CD8-positive, alpha-beta memory T cell (primary cell): ENCODE measurements at regions of chr4 and their contacts with region 1.

Region 1: GRCh38 chr4:39947423-39947822 is 30.3 kb downstream of the PDS5A start:
- DNase-seq: no peak
- H3K4me3 ChIP-seq: no peak overlapping the region
- H3K4me3 Mint-ChIP-seq: peak overlapping the region in 1 of 7 donors; percentile 42
- H3K27ac ChIP-seq: no peak overlapping the region
- H3K27ac Mint-ChIP-seq: peak overlapping the region in 5 of 8 donors; percentile 13 to 68 (median 52)
- H3K4me1 ChIP-seq: peaks cover 6% of the 10 kb centered on the region
- H3K4me1 Mint-ChIP-seq: peaks cover 41 to 69% (median 68%) of the 10 kb centered on the region in 3 donors
- H3K27me3 ChIP-seq: no peaks in the 10 kb centered on the region
- H3K27me3 Mint-ChIP-seq: no peaks in the 10 kb centered on the region

Region 2: GRCh38 chr4:39741401-39741800 is 206.0 kb before region 1 on chr4:
- CTCF ChIA-PET with region 1: no interaction called
- POLR2A ChIA-PET with region 1: interaction called, 10 read pairs
- DNase-seq: no peak
- H3K4me3 ChIP-seq: no peak overlapping the region
- H3K4me3 Mint-ChIP-seq: no peak overlapping the region
- H3K27ac ChIP-seq: no peak overlapping the region
- H3K27ac Mint-ChIP-seq: peak overlapping the region in 1 of 8 donors; percentile 33
- H3K4me1 ChIP-seq: no peaks in the 10 kb centered on the region
- H3K4me1 Mint-ChIP-seq: peaks cover 12 to 25% (median 18%) of the 10 kb centered on the region in 3 donors
- H3K27me3 ChIP-seq: no peaks in the 10 kb centered on the region
- H3K27me3 Mint-ChIP-seq: no peaks in the 10 kb centered on the region

Region 3: DNA sequence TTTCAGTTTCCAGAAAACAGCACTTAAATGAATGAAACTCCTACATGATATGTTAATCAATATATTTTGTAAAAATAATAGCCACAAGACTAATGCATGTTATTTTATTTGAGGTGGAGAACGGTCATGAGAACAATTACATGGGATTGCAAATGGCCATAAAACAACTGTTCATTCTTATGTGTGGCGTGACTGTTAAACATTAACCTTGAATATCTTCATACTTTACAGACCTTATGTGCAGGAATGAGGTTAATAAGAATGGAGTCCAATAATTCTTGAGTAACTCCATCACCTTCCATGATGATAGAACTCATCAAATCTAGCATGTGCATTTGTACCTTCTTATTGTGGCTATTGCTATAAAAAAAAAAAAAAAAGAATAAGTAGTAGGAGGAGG is 25.0 kb before region 1 on chr4:
- CTCF ChIA-PET with region 1: no interaction called
- POLR2A ChIA-PET with region 1: no interaction called
- DNase-seq: no peak
- H3K4me3 ChIP-seq: no peak overlapping the region
- H3K4me3 Mint-ChIP-seq: no peak overlapping the region
- H3K27ac ChIP-seq: no peak overlapping the region
- H3K27ac Mint-ChIP-seq: peak overlapping the region in 2 of 8 donors; percentile 31 to 32
- H3K4me1 ChIP-seq: no peaks in the 10 kb centered on the region
- H3K4me1 Mint-ChIP-seq: peaks cover 16 to 24% (median 21%) of the 10 kb centered on the region in 3 donors
- H3K27me3 ChIP-seq: no peaks in the 10 kb centered on the region
- H3K27me3 Mint-ChIP-seq: peaks cover 0 to 2% of the 10 kb centered on the region in 2 donors